ENCODE measurements at regions of chr7 and their contacts with region 1.

Region 1: DNA sequence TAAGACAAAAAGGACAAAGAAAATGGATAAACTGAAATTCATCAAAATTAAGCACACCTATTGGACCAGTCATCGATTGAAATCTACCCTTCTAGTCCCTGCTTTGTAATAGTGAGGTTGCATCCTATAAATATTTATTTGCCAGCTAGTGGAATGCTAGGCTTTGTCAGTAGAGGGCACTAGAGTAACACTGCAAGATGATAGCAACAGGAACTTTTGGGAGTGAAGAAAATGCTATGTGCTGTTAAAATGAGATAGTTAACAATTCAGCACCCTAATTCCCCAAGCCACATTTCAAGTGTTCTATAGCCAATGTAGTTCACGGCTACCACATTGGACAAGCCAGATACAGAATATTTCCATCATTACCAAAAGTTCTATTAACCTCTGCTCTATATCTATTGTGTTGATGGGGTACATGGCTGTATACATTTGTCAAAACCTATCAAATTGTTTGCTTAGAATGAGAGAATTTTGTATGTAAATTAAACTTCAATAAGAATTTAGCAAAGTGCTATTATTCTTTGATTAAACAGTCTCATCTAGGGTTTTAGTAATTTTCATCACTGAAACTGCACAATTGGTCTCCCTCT is 69.8 kb downstream of the LSMEM1 start:
- DNase-seq: peak; percentile 22 to 49 (median 45)
- H3K4me3 ChIP-seq: no peak overlapping the region
- H3K4me3 Mint-ChIP-seq: no peak overlapping the region
- H3K27ac ChIP-seq: no peak overlapping the region
- H3K27ac Mint-ChIP-seq: no peak overlapping the region
- H3K4me1 ChIP-seq: no peaks in the 10 kb centered on the region
- H3K4me1 Mint-ChIP-seq: no peaks in the 10 kb centered on the region
- H3K27me3 ChIP-seq: no peaks in the 10 kb centered on the region
- H3K27me3 Mint-ChIP-seq: peaks cover 2 to 8% (median 6%) of the 10 kb centered on the region in 3 donors
- CTCF ChIP-seq: peak; percentile 83

Region 2: DNA sequence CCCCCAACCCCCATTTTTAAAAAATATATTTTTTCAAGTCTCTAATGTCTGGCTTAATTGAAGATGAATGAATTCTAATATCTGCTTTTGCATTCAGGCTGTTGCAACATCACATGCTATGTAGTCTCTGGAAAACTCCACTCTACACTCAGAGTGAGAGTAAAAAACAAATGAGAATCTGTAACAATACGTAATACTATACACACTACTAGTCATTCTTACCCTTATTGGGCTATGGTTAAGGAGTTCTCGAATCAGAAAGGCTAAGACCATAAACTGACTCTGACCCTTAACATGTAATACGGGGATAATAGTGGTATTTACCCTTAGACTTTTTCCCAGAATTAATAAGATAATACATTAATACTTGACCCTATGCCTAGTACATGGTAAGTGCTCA is 282.5 kb after region 1 on chr7:
- intact Hi-C with region 1: no loop called
- DNase-seq: no peak
- H3K4me3 ChIP-seq: no peak overlapping the region
- H3K4me3 Mint-ChIP-seq: no peak overlapping the region
- H3K27ac ChIP-seq: no peak overlapping the region
- H3K27ac Mint-ChIP-seq: no peak overlapping the region
- H3K4me1 ChIP-seq: no peaks in the 10 kb centered on the region
- H3K4me1 Mint-ChIP-seq: no peaks in the 10 kb centered on the region
- H3K27me3 ChIP-seq: no peaks in the 10 kb centered on the region
- H3K27me3 Mint-ChIP-seq: no peaks in the 10 kb centered on the region
- CTCF ChIP-seq: no peak

Region 3: GRCh38 chr7:112898432-112899290 is 348.1 kb after region 1 on chr7:
- intact Hi-C with region 1: loop called (anchors 5 kb)
- DNase-seq: peak; percentile 53 to 64 (median 64)
- H3K4me3 ChIP-seq: no peak overlapping the region
- H3K4me3 Mint-ChIP-seq: no peak overlapping the region
- H3K27ac ChIP-seq: peak overlapping the region in 1 of 2 donors; percentile 15
- H3K27ac Mint-ChIP-seq: peak overlapping the region in 2 of 7 donors; percentile 18 to 26
- H3K4me1 ChIP-seq: no peaks in the 10 kb centered on the region
- H3K4me1 Mint-ChIP-seq: peaks cover under 1% of the 10 kb centered on the region
- H3K27me3 ChIP-seq: no peaks in the 10 kb centered on the region
- H3K27me3 Mint-ChIP-seq: peaks cover 0 to 2% (median 0%) of the 10 kb centered on the region in 3 donors
- CTCF ChIP-seq: peak; percentile 86

Region 4: DNA sequence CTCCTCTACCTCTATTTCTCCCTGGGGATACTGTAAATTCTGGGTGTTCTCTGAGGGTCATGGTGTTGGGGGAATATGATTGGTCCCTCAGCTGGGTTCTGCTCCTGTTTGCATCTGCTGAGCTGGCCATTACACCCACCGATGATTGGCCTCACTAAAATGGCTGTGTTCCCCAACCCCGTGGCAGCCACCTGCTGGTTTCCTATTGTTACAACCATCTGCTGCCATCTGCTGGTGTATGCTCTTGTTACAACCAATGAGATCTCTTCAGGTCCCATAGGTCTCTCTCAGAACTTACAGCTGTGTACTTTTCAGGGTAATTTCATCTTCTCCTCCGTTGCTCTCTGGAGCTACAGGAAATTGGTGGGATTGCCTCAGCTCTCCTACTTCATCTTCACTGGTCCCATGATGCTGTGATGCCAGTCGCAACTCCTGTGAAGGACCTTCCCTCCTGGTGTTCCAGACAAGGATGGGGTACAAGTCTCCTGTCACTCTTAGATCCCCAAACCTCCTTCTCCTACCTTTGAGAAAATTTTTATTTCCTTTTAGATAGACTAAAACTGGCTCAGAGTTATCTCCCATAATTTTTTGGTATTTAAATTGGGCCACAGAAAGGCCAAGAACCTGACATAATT is 871.2 kb after region 1 on chr7:
- intact Hi-C with region 1: loop called (anchors 5 kb)
- DNase-seq: peak; percentile 29 to 58 (median 52)
- H3K4me3 ChIP-seq: no peak overlapping the region
- H3K4me3 Mint-ChIP-seq: no peak overlapping the region
- H3K27ac ChIP-seq: no peak overlapping the region
- H3K27ac Mint-ChIP-seq: no peak overlapping the region
- H3K4me1 ChIP-seq: no peaks in the 10 kb centered on the region
- H3K4me1 Mint-ChIP-seq: no peaks in the 10 kb centered on the region
- H3K27me3 ChIP-seq: no peaks in the 10 kb centered on the region
- H3K27me3 Mint-ChIP-seq: no peaks in the 10 kb centered on the region
- CTCF ChIP-seq: peak; percentile 79